MCF 10A (cell line): ENCODE measurements at regions of chr1 and their contacts with region 1.

Region 1: DNA sequence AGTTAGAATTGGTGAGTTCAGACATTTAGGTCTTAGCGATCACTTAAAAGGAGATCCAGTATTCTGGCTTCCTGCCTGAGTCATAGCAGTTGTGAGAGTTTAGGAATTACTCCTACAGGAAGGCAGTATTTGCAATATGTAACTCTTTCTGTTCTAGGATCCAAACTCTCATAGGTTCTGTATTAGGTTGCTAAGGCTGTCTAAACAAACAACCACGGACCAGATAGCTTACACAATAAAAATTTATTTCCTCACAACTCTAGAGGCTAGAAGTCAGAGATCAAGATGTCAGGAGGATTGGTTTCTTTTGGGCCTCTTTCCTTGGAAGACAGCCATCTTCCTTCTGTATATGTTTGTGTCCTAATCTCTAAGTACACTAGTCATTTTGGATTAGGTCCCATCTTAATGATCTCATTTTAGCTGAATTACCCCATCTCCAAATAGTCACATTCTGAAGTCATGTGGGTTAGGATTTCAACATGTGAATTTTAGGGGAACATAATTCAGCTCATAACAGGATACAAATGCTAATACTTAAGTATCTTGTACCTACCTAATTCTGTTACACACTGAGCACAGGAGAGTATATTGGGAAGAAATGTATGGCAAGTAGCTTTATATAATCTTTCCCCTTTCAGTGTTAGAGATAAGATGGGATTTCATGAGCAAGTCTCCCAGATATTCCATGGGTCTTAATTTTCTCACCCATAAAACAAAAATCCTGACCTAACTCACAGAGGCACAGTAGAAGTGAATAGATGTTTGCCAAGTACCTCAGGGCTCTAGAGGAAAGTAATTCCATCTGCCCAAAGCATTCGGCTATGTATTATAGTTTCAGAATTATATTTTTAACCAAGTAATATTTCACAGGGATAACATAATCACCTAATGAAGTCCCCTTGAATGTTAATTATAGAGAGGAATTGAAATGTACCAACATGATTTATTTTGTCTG is 144.4 kb downstream of the PTBP2 start:
- DNase-seq: peak; percentile 97
- H3K4me3 Mint-ChIP-seq: no peak overlapping the region
- H3K27ac Mint-ChIP-seq: peak overlapping the region; percentile 98
- H3K4me1 Mint-ChIP-seq: peaks cover 11% of the 10 kb centered on the region
- H3K27me3 Mint-ChIP-seq: no peaks in the 10 kb centered on the region
- CTCF ChIP-seq: no peak

Region 2: DNA sequence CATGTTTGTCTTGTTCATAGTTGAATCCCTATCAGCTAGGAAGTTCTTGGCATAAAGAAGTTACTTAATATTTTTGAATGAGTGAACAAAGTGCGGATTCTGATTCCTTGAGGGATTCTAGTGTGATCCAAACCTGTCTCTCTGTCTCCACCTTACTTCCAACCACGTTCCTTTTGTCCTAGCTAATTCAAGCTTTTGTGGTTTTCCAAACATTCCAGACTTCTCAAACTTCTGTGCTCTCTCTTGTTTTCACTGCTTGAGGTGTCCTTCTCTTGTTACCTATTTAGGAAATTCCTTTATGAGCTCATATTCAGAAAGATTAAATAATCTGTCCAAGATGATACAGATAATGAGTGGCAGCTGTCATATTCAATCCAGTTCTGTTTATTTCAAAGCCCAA is 208.8 kb after region 1 on chr1:
- CTCF ChIA-PET with region 1: no interaction called
- POLR2A ChIA-PET with region 1: no interaction called
- intact Hi-C with region 1: no loop called
- DNase-seq: no peak
- H3K4me3 Mint-ChIP-seq: no peak overlapping the region
- H3K27ac Mint-ChIP-seq: no peak overlapping the region
- H3K4me1 Mint-ChIP-seq: no peaks in the 10 kb centered on the region
- H3K27me3 Mint-ChIP-seq: no peaks in the 10 kb centered on the region
- CTCF ChIP-seq: no peak

Region 3: DNA sequence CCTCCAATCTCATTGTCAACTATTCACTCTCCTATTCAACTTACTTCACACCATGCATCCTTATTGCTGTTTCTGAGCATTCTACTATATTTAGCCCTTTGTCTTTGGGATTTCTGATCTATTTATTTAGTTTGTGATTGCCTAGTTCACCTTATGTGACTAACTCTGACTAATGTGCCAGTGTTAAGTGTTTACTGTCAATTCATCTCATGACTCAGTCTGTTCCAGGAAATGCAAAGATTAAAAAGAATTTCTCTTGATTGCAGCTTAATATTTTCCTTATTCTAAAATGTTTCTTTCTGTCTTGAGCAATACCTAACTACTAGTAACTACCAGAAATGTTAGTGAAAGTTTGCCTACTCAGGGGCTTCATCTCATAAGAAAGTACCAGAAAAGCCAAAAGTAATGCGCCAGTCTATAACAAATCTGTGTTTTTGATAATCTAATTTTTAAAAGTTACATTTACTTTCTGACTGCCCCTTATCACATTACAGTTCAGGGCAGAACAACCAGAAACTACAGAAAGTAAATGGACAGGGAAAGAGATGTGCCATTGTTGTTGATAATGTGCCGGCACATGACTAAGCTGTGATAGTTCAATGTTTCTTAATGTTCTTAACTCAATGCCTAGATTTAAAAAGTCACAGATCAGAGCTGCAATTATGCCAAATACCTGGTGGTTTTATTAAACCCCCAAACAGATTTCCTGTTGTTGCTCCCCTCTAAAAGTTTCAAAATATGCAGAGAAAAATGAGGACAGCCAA is 412.1 kb after region 1 on chr1:
- CTCF ChIA-PET with region 1: no interaction called
- POLR2A ChIA-PET with region 1: no interaction called
- intact Hi-C with region 1: loop called (anchors 5 kb)
- DNase-seq: peak; percentile 87
- H3K4me3 Mint-ChIP-seq: peak overlapping the region; percentile 9
- H3K27ac Mint-ChIP-seq: peak overlapping the region; percentile 91
- H3K4me1 Mint-ChIP-seq: peaks cover 21% of the 10 kb centered on the region
- H3K27me3 Mint-ChIP-seq: no peaks in the 10 kb centered on the region
- CTCF ChIP-seq: no peak